Ovary (tissue), 10 donors: ENCODE measurements at regions of chr6 and their contacts with region 1.

Region 1: DNA sequence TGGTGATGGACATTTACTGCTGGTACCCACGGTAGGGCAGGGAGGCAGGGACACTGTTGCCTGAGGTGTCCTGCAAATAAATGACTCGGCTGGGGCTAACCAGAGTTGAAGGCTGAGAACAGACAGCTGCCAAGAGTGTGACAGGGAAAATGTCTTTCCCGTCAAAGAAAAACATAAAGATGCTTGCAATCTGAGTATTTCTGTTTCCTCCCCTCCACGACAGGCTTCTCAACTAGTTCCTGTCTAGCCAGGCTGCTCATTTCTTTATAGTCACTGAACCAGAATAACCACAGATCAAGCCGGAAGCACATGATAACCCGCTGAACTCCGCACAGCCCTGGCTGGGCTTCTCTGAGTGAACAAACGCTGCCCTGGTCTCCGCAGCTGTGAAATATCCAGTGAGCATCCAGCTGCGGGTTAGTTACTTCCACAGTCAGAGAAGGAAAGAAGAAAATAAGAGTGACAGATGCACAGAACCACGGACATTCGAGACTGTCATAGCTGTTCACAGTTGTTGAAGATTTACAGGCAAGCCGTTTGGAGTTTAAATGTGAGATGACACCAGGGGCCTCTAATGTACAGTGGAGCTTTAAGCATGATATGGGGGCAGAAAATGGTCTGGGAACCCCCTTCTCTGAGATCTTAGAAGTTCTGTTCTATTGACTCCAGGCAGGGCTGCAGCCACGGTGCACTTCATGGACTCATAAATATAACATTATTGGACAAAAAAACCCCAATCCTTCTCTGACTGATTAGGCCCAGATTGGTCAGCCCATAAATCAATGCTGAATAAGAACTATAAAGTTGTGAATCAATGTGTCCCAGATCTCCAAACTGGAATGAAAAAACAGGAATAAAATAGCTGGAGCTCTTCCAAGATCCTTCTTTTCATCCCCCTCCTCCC is 299.9 kb upstream of the SUPT3H start:
- DNase-seq: no peak
- H3K4me3 ChIP-seq: no peak overlapping the region
- H3K27ac ChIP-seq: no peak overlapping the region
- H3K4me1 ChIP-seq: peaks cover 1% of the 10 kb centered on the region
- H3K27me3 ChIP-seq: no peaks in the 10 kb centered on the region
- CTCF ChIP-seq: no peak
- EP300 ChIP-seq: no peak
- POLR2A ChIP-seq: no peak

Region 2: GRCh38 chr6:45617441-45617840 is 60.2 kb before region 1 on chr6:
- intact Hi-C with region 1: loop called in 1 of 4 experiments (anchors 2 kb)
- DNase-seq: no peak
- H3K4me3 ChIP-seq: no peak overlapping the region
- H3K27ac ChIP-seq: no peak overlapping the region
- H3K4me1 ChIP-seq: no peaks in the 10 kb centered on the region
- H3K27me3 ChIP-seq: no peaks in the 10 kb centered on the region
- CTCF ChIP-seq: no peak
- EP300 ChIP-seq: no peak
- POLR2A ChIP-seq: no peak

Region 3: GRCh38 chr6:46062306-46062706 is 384.7 kb after region 1 on chr6:
- intact Hi-C with region 1: no loop called
- DNase-seq: no peak
- H3K4me3 ChIP-seq: no peak overlapping the region
- H3K27ac ChIP-seq: no peak overlapping the region
- H3K4me1 ChIP-seq: no peaks in the 10 kb centered on the region
- H3K27me3 ChIP-seq: no peaks in the 10 kb centered on the region
- CTCF ChIP-seq: no peak
- EP300 ChIP-seq: no peak
- POLR2A ChIP-seq: no peak

Region 4: DNA sequence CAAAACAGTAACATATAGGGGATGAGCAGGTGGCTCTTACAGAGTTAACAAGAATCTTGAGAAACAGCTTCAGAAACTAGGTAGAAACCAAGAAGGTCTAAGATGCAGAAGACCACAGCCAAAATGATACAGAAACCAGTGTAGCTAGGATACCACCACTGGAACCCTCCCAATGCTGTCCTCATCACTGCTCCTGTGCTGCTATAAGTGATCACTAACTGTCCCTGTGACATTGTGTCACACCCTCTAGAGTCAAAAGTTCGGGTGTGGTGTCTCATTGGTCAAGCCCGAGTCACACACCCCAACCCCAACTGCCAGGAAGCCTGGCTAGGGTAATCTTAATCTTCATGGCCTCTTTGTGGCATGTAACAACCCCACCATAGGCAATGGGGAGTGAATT is 660.5 kb after region 1 on chr6:
- intact Hi-C with region 1: no loop called
- DNase-seq: no peak
- H3K4me3 ChIP-seq: no peak overlapping the region
- H3K27ac ChIP-seq: no peak overlapping the region
- H3K4me1 ChIP-seq: no peaks in the 10 kb centered on the region
- H3K27me3 ChIP-seq: no peaks in the 10 kb centered on the region
- CTCF ChIP-seq: no peak
- EP300 ChIP-seq: no peak
- POLR2A ChIP-seq: no peak